HAP-1 (cell line): ENCODE measurements at regions of chr3 and their contacts with region 1.

Region 1: DNA sequence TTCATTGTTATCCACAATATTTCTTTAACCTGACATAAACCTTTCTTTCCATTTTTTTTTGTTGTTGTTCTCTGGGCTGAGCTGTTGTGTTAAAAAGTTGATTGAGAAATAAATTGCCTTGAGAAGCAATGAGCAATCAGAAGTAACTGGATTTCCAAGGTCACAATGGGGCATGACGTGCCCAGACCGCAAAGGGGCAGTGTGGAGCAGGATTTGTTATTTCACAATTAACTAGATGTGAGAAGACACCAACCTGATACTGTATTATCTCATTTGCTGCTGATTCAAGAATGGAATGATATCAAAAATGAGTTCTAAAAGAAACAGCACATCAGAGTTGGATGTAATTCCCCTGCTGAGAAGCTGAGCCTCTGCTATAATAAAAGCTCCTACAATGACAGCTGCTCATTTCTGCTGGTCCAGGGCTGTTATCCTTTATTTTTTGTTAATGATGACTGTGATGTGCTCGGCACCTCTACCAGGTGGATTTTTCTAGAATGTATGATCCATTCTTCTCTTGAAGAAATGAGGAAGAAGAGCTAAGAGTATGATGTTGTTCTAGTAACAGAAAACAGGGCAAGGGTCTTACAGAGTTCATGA is 28.1 kb downstream of the CPNE4 start:
- DNase-seq: peak; percentile 40 to 67
- H3K4me3 ChIP-seq: no peak overlapping the region
- H3K4me1 ChIP-seq: peaks cover 5% of the 10 kb centered on the region
- H3K27me3 ChIP-seq: no peaks in the 10 kb centered on the region

Region 2: DNA sequence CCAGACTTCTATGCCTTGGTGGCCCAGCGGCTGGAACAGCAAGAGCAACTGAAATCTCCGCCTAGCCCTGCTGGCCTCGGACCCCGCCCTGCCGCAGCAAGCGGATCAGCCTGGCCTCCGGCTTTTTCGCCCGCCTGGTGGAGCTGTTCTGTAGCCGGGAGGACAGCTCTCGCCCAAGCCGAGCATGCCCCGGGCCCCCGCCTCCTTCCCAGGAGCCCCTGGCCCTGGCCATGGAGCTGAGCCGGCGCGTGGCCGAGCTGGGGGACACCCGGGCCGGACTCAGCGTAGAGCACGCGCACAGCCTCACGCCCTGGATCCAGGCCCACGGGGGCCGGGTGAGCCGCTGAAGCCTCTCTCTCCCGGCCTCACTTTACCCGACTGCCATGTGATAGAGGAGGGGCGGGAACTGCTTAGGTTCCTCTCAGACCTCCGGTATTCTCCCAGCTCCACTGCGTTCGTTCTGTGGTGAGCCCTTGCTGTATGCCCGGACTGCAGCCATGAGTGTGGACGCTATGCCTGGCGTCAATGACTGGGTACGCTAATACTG is 479.8 kb before region 1 on chr3:
- in situ Hi-C with region 1: loop called (anchors 25 kb)
- DNase-seq: no peak
- H3K4me3 ChIP-seq: no peak overlapping the region
- H3K4me1 ChIP-seq: no peaks in the 10 kb centered on the region
- H3K27me3 ChIP-seq: no peaks in the 10 kb centered on the region

Region 3: GRCh38 chr3:131591394-131592014 is 415.2 kb before region 1 on chr3:
- in situ Hi-C with region 1: no loop called
- DNase-seq: no peak
- H3K4me3 ChIP-seq: no peak overlapping the region
- H3K4me1 ChIP-seq: no peaks in the 10 kb centered on the region
- H3K27me3 ChIP-seq: peaks cover 3% of the 10 kb centered on the region; the same call in 1 of the 2 replicates